GM18951 (cell line): ENCODE measurements at regions of chr7 and their contacts with region 1.

Region 1: DNA sequence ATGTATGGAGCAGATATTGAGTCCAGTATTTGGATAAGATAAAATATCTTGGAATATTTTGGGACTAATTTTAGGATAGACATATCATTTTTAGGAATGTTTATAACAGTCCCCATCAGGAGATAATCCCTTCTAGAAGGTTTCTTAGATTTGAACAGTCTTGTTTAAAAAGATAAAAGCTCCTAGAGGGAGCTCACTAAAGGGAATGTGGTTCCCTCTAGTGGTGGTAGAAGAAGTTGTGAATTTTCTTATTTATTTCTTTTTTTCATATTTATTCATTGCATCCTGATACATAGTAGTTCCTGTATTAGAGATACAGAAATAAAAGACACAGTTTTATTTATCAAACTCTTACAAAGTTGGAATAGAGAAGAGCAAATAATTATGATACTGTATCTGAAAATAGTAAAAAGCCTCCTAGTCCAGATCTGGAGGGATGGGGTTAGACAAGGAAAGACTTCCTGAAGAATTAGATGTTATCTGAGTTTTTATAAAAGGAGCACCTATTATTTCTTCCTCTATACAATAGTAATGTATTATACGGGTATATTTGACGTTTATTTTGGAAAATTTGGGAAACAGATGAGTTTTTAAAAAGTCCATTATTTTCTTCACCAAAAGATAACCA is 24.5 kb upstream of the KLF14 start:
- POLR2A ChIP-seq: no peak

Region 2: DNA sequence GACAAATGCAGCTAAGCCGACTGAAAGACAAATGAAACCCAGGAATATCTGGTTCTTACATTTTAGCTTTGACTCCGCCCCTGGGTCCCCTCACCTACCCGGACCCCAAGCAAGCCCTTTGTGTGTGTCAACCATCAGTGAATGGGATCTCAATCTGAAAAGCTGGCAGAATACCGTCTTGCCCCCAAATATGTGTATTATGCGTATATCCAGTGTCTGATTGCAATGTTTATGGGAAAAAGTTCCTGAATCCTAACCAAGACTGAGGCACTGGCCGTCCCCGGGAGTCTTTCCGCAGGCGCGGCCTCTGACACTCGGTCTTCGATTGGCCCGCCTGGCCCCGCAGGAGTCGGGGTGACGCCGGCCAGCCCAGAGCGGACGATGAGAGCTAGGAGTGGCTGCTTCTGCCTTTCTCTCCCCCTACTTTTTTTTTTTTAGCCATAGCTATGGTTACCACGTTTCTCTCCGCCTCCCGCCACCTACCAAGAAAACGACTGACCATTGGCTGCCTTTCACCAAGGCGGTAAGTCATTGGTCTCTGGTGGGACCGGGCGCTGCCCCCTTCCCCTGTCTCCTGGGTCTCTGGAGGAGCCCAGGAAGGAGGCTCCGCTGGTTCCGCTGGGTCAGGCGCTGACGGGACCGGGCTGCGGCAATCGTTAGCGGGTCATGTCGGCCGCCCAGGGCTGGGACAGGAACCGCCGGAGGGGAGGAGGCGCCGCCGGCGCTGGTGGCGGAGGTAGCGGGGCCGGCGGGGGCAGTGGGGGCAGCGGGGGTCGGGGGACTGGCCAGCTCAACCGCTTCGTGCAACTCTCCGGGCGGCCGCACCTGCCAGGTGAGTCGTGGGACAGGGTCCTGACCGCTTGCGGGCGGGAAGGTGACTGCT is 688.3 kb before region 1 on chr7 and contains the start of gene KLHDC10:
- in situ Hi-C with region 1: loop called (anchors 25 kb)
- POLR2A ChIP-seq: peak; percentile 72

Region 3: DNA sequence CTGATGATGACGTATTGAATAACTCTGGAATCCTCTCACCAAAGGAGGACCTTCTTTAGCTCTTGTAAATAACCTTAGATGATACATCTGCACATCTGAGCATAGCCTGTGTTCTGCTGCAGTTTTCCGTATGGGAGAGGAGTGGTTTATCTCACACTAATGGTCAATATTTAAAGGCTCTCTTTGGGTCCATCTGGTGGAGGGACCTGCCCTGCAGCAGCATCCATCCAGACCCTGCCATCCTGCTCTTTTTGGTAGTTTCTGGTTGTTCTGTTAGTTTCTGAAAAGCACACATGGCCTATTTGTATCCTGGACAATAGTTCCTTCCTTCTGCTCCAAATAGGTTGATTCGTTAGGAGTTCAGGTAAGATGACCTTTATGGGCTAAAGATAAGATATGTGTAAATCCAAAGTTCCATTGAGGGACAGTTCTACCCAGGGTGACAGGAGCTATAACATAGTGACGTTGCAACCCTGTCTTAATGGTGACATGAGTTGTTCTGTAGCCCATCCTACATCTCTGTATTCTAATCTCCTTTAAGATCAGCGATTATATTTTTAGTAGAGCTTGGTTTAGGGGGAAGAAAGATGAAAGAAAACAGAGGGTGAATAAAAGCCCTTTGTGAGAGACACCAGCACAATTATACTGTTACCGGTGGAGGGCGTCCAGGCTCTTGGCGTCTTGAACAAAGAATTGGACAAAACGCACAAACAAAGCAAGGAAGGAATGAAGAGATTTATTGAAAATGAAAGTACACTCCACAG is 35.5 kb after region 1 on chr7:
- in situ Hi-C with region 1: no loop called
- POLR2A ChIP-seq: no peak

Region 4: GRCh38 chr7:131488361-131488760 is 729.8 kb after region 1 on chr7:
- in situ Hi-C with region 1: no loop called
- POLR2A ChIP-seq: no peak